IMR-90 (cell line): ENCODE measurements at regions of chr13 and their contacts with region 1.

Region 1: DNA sequence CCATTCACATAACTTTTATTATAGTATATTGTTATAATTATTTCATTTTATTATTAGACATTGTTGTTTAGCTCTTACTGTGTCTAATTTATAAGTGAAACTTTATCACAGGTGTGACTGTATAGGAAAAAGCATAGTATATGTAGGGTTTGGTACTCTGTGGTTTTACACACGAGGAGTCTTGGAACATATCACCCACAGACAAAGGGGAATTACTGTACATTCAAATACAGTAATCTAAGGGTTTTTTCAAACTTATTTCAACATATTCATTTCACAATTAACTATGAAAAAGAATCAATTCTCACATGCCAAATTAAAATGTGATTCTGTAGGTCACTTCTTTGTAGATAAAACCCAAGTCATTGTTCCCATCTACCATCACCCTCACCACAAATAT is 46.0 kb downstream of the RBM26 start:
- DNase-seq: no peak
- ATAC-seq: no peak
- H3K4me3 ChIP-seq: no peak overlapping the region
- H3K27ac ChIP-seq: no peak overlapping the region
- H3K4me1 ChIP-seq: no peaks in the 10 kb centered on the region
- H3K27me3 ChIP-seq: no peaks in the 10 kb centered on the region
- CTCF ChIP-seq: no peak
- POLR2A ChIP-seq: no peak
- RAD21 ChIP-seq: no peak

Region 2: DNA sequence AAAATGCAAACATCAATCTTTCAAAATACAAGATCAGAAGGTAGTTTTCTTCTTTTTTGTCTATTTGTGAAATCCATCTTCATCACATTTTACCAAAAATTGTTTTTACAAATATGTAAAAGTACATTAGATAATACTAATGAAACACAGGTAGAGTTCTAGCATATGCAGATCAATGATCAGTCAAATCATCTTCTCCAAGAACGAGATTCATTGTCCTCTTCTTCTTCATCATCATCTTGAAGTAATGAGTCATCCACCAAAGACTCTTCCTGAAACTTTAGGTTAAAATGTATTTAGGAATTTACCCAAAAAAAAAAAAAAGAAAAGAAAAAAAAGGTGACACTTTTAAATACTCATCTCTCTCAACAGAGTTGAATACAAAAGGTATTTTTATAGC is 39.7 kb before region 1 on chr13:
- CTCF ChIA-PET with region 1: no interaction called
- POLR2A ChIA-PET with region 1: no interaction called
- dilution Hi-C with region 1: no loop called
- in situ Hi-C with region 1: no loop called
- intact Hi-C with region 1: loop called (anchors 5 kb)
- DNase-seq: no peak
- ATAC-seq: no peak
- H3K4me3 ChIP-seq: no peak overlapping the region
- H3K27ac ChIP-seq: no peak overlapping the region
- H3K4me1 ChIP-seq: no peaks in the 10 kb centered on the region
- H3K27me3 ChIP-seq: no peaks in the 10 kb centered on the region
- CTCF ChIP-seq: no peak
- POLR2A ChIP-seq: no peak
- RAD21 ChIP-seq: no peak

Region 3: DNA sequence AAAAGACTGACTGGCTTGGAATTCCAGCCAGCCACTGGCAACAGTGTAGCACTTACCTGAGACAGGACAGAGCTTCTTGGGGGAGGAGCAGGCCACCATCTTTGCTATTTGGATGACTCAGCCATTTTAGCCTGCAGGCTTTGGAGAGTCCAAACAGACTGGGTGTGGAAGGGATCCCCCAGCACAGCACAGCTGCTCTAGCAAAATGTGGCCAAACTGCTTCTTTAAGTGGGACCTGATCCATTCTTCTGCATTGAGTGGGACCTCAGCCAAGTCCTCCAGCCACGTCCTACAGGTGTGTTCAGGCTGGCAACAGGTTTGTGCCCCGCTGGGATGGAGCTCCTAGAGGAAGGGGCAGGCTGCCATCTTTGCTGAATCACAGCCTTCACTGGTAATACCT is 200.9 kb after region 1 on chr13:
- CTCF ChIA-PET with region 1: no interaction called
- POLR2A ChIA-PET with region 1: no interaction called
- dilution Hi-C with region 1: no loop called
- in situ Hi-C with region 1: no loop called
- intact Hi-C with region 1: no loop called
- DNase-seq: no peak
- ATAC-seq: no peak
- H3K4me3 ChIP-seq: no peak overlapping the region
- H3K27ac ChIP-seq: no peak overlapping the region
- H3K4me1 ChIP-seq: no peaks in the 10 kb centered on the region
- H3K27me3 ChIP-seq: no peaks in the 10 kb centered on the region
- CTCF ChIP-seq: no peak
- POLR2A ChIP-seq: no peak
- RAD21 ChIP-seq: no peak